ENCODE measurements at regions of chr7 and their contacts with region 1.

Region 1: DNA sequence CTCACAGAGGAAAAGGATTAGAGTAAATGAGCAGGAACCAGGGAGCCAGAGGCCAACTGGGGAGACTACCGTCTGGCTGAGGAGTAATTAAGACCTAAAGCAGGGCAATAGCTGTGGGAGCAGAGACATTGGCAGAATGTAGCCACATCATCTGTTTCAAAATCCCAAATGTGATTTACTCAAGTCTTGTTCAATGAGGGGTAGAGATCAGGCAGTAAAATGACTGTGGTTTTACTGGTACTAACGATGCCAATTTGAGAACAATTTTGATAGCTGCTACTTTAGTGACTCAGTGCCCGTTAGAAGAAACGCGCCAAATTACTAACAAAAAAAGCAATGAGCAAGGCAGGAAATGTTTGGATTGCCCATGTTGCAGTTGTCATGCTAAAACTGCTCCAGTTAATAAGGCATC is 12.7 kb upstream of the MIOS start:
- DNase-seq: peak; percentile 53 to 76
- ATAC-seq: peak; percentile 75
- H3K4me3 ChIP-seq: peak overlapping the region in 3 of 4 donors; percentile 9 to 42 (median 25)
- H3K27ac ChIP-seq: peak overlapping the region; percentile 85 to 92 (median 90)
- H3K4me1 ChIP-seq: peaks cover 30 to 33% of the 10 kb centered on the region in 2 donors
- H3K27me3 ChIP-seq: no peaks in the 10 kb centered on the region
- CTCF ChIP-seq: no peak
- POLR2A ChIP-seq: no peak

Region 2: GRCh38 chr7:7176421-7177043 is 377.5 kb before region 1 on chr7:
- in situ Hi-C with region 1: loop called in 2 of 4 experiments (anchors 10 to 25 kb)
- intact Hi-C with region 1: no loop called
- DNase-seq: peak in 1 of 2 donors; percentile 22
- ATAC-seq: peak; percentile 89 to 95
- H3K4me3 ChIP-seq: no peak overlapping the region
- H3K27ac ChIP-seq: no peak overlapping the region
- H3K4me1 ChIP-seq: peaks cover 4 to 6% of the 10 kb centered on the region in 2 donors
- H3K27me3 ChIP-seq: no peaks in the 10 kb centered on the region
- CTCF ChIP-seq: no peak
- POLR2A ChIP-seq: no peak

Region 3: DNA sequence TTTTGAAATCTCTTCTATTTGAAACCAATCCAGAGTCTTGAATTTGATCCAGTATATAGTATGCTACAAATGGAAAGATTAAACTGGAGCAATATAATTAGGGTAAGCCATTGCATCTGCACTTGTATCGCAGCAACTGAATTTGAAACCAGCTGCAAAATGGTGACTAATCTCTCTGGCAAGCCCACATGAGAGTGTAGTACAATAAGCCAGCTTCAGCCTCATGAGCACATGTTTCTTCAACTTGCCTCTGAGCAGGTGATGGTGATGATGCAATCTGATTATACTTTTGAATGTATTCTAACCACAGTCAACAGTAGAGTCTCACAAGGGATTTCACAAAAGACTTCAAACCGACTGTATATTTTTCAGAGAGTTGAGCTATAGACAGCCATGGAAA is 165.2 kb after region 1 on chr7:
- in situ Hi-C with region 1: no loop called
- intact Hi-C with region 1: loop called (anchors 1 kb)
- DNase-seq: peak; percentile 82 to 83
- ATAC-seq: peak; percentile 100
- H3K4me3 ChIP-seq: no peak overlapping the region
- H3K27ac ChIP-seq: peak overlapping the region; percentile 53 to 79 (median 68)
- H3K4me1 ChIP-seq: peaks cover 15 to 21% of the 10 kb centered on the region in 2 donors
- H3K27me3 ChIP-seq: no peaks in the 10 kb centered on the region
- CTCF ChIP-seq: no peak
- POLR2A ChIP-seq: no peak

Measured in gastrocnemius medialis (tissue), 4 donors.